MCF 10A (cell line): ENCODE measurements at regions of chr12 and their contacts with region 1.

Region 1: GRCh38 chr12:101323255-101323654 is 43.4 kb downstream of the UTP20 start:
- DNase-seq: no peak
- H3K4me3 Mint-ChIP-seq: no peak overlapping the region
- H3K27ac Mint-ChIP-seq: no peak overlapping the region
- H3K4me1 Mint-ChIP-seq: no peaks in the 10 kb centered on the region
- H3K27me3 Mint-ChIP-seq: no peaks in the 10 kb centered on the region
- CTCF ChIP-seq: no peak

Region 2: DNA sequence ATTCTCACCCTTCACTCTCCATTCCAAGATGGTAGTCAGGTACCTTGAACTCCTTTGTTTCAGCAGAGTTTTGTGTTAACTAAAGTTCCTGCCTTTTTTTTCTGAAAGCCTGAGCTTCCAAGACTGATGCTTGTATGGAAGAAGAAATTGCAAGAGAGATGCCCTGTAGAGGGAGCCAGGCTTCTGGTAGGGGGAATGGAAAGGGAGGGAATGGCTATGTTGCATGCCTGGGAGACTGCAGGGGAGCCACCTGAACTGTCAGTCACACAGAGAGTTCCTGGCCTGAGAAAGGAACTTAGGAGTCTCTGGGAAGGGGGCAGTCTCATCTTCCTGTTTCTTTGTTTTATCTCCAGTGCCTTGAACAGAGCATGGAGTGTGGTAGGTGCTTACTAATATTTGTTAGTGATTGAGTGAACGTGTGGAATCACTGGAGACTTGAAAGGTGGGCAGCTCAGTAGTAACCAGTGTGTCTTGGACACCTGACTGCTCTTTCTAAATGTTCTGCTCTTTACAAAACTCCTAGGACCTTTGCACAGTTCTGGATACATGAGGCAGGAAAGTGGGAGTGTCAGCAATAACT is 396.5 kb before region 1 on chr12:
- CTCF ChIA-PET with region 1: no interaction called
- POLR2A ChIA-PET with region 1: no interaction called
- intact Hi-C with region 1: loop called (anchors 1 kb)
- DNase-seq: peak; percentile 54
- H3K4me3 Mint-ChIP-seq: no peak overlapping the region
- H3K27ac Mint-ChIP-seq: no peak overlapping the region
- H3K4me1 Mint-ChIP-seq: peaks cover 13% of the 10 kb centered on the region
- H3K27me3 Mint-ChIP-seq: no peaks in the 10 kb centered on the region
- CTCF ChIP-seq: peak; percentile 36

Region 3: GRCh38 chr12:101010896-101011295 is 312.4 kb before region 1 on chr12:
- CTCF ChIA-PET with region 1: no interaction called
- POLR2A ChIA-PET with region 1: no interaction called
- intact Hi-C with region 1: no loop called
- DNase-seq: no peak
- H3K4me3 Mint-ChIP-seq: no peak overlapping the region
- H3K27ac Mint-ChIP-seq: no peak overlapping the region
- H3K4me1 Mint-ChIP-seq: no peaks in the 10 kb centered on the region
- H3K27me3 Mint-ChIP-seq: no peaks in the 10 kb centered on the region
- CTCF ChIP-seq: no peak

Region 4: GRCh38 chr12:101336437-101336836 is 13.2 kb after region 1 on chr12:
- CTCF ChIA-PET with region 1: interaction called, 16 read pairs
- POLR2A ChIA-PET with region 1: no interaction called
- intact Hi-C with region 1: no loop called
- DNase-seq: no peak
- H3K4me3 Mint-ChIP-seq: no peak overlapping the region
- H3K27ac Mint-ChIP-seq: no peak overlapping the region
- H3K4me1 Mint-ChIP-seq: no peaks in the 10 kb centered on the region
- H3K27me3 Mint-ChIP-seq: no peaks in the 10 kb centered on the region
- CTCF ChIP-seq: no peak